HepG2 (cell line): ENCODE measurements at regions of chr13 and their contacts with region 1.

Region 1: GRCh38 chr13:21100994-21101757 is 39.8 kb upstream of the LATS2 start:
- DNase-seq: peak; percentile 96
- ATAC-seq: peak; percentile 92
- H3K4me3 ChIP-seq: peak overlapping the region in 2 of 3 experiments; percentile 24 to 65; a peak in 3 of 6 replicates
- H3K27ac ChIP-seq: peak overlapping the region; percentile 81
- H3K4me1 ChIP-seq: peaks cover 52% of the 10 kb centered on the region
- H3K27me3 ChIP-seq: no peaks in the 10 kb centered on the region; a peak in 1 of 5 replicates
- CTCF ChIP-seq: no peak
- EP300 ChIP-seq: peak in 1 of 2 experiments; percentile 87; a peak in 2 of 4 replicates
- POLR2A ChIP-seq: no peak
- RAD21 ChIP-seq: no peak

Region 2: GRCh38 chr13:21069561-21070004 is 31.6 kb before region 1 on chr13:
- CTCF ChIA-PET with region 1: no interaction called
- POLR2A ChIA-PET with region 1: interaction called, 8 read pairs
- in situ Hi-C with region 1: no loop called
- intact Hi-C with region 1: loop called (anchors 1 kb)
- DNase-seq: peak; percentile 63
- ATAC-seq: peak; percentile 63; the same call in 2 of the 3 replicates
- H3K4me3 ChIP-seq: peak overlapping the region in 1 of 3 experiments; percentile 18; a peak in 1 of 6 replicates
- H3K27ac ChIP-seq: no peak overlapping the region
- H3K4me1 ChIP-seq: peaks cover 28% of the 10 kb centered on the region
- H3K27me3 ChIP-seq: peaks cover 0 to 2% of the 10 kb centered on the region in 2 experiments; a peak in 1 of 5 replicates
- CTCF ChIP-seq: no peak
- EP300 ChIP-seq: peak in 1 of 2 experiments; percentile 34; a peak in 1 of 4 replicates
- POLR2A ChIP-seq: no peak
- RAD21 ChIP-seq: no peak